ENCODE measurements at regions of chr3 and their contacts with region 1.

Region 1: DNA sequence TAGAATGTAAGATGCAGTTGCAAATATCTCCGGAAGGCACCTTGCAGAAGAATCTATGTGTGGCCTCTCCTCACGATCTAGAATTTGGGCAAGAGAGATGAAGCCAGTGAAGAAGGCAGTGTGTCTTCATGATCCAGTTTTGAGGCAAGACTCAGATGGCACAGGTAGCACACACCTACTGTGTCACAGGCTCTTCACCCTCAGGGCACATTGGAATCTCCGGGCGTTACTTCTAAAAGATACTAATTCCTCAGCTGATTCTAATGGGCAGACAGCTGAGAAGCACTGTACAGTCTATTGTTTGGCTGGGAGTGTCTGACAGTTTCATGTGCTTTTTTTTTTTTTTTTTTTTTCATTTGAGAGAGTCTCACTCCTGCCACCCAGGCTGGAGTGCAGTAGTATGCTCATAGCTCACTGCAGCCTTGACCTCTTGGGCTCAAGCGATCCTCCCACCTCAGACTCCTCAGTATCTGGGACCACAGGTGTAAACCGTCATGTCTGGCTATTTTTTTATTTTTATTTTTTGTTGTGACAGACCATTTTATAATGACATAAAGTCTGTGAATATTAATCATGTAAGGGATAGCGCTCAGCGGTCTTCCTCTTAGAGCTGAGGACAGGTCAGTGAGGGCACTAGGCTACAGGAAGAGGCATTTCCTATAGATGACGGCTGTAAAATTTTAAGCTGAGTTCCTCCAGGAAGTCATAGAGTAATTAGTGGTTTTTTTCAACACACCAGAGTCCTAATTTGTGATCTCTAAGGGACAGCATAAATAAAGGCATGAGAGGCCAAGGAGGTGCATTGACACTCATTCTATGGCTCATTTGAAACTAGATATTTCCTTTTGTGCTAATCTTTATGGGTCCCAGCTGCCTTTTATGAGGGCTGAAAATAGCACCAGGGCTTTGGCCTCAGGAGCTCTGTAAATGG is 4.0 kb downstream of the C3orf52 start:
- DNase-seq: no peak
- ATAC-seq: no peak
- H3K4me3 ChIP-seq: no peak overlapping the region
- H3K27ac ChIP-seq: peak overlapping the region; percentile 45
- H3K4me1 ChIP-seq: peaks cover 55% of the 10 kb centered on the region
- H3K27me3 ChIP-seq: no peaks in the 10 kb centered on the region
- CTCF ChIP-seq: no peak

Region 2: GRCh38 chr3:111252779-111253178 is 837.4 kb before region 1 on chr3:
- CTCF ChIA-PET with region 1: no interaction called
- POLR2A ChIA-PET with region 1: no interaction called
- in situ Hi-C with region 1: no loop called
- intact Hi-C with region 1: no loop called
- DNase-seq: no peak
- ATAC-seq: no peak
- H3K4me3 ChIP-seq: no peak overlapping the region
- H3K27ac ChIP-seq: no peak overlapping the region
- H3K4me1 ChIP-seq: no peaks in the 10 kb centered on the region
- H3K27me3 ChIP-seq: no peaks in the 10 kb centered on the region
- CTCF ChIP-seq: no peak

Region 3: DNA sequence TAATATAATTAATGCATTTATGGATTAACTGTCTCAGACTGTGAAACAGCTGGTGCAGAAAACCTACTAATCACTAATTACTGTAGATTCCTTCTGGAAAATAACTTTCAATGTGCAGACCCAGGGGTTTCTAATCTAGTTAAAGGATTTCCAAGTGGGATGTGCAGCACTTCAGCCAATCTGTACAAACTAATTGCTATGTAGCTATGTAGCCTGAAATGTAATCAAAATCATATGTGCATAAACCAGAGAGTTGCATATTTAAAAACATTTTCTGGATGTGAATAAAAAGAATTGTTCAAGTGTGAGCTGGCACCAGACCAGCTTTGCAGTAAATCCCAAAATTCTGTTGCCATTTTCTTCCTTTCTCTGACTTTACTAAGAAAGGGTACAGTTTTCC is 675.7 kb before region 1 on chr3:
- CTCF ChIA-PET with region 1: no interaction called
- POLR2A ChIA-PET with region 1: interaction called, 17 read pairs
- in situ Hi-C with region 1: no loop called
- intact Hi-C with region 1: no loop called
- DNase-seq: no peak
- ATAC-seq: no peak
- H3K4me3 ChIP-seq: no peak overlapping the region
- H3K27ac ChIP-seq: no peak overlapping the region
- H3K4me1 ChIP-seq: no peaks in the 10 kb centered on the region
- H3K27me3 ChIP-seq: no peaks in the 10 kb centered on the region
- CTCF ChIP-seq: no peak